ENCODE measurements at regions of chr19 and their contacts with region 1.

Region 1: GRCh38 chr19:35509861-35510625 is 3.4 kb downstream of the DMKN start:
- DNase-seq: peak; percentile 89
- ATAC-seq: peak; percentile 84
- H3K4me3 ChIP-seq: peak overlapping the region; percentile 96
- H3K27ac ChIP-seq: peak overlapping the region; percentile 77
- H3K4me1 ChIP-seq: peaks cover 13% of the 10 kb centered on the region; the same call in 1 of the 2 replicates
- H3K27me3 ChIP-seq: no peaks in the 10 kb centered on the region
- CTCF ChIP-seq: peak; percentile 88

Region 2: GRCh38 chr19:35269421-35270117 is 240.5 kb before region 1 on chr19:
- CTCF ChIA-PET with region 1: no interaction called
- POLR2A ChIA-PET with region 1: no interaction called
- intact Hi-C with region 1: loop called (anchors 5 kb)
- DNase-seq: peak; percentile 76
- ATAC-seq: peak; percentile 75
- H3K4me3 ChIP-seq: peak overlapping the region; percentile 67
- H3K27ac ChIP-seq: no peak overlapping the region
- H3K4me1 ChIP-seq: peaks cover 20% of the 10 kb centered on the region
- H3K27me3 ChIP-seq: no peaks in the 10 kb centered on the region
- CTCF ChIP-seq: peak; percentile 43

Region 3: DNA sequence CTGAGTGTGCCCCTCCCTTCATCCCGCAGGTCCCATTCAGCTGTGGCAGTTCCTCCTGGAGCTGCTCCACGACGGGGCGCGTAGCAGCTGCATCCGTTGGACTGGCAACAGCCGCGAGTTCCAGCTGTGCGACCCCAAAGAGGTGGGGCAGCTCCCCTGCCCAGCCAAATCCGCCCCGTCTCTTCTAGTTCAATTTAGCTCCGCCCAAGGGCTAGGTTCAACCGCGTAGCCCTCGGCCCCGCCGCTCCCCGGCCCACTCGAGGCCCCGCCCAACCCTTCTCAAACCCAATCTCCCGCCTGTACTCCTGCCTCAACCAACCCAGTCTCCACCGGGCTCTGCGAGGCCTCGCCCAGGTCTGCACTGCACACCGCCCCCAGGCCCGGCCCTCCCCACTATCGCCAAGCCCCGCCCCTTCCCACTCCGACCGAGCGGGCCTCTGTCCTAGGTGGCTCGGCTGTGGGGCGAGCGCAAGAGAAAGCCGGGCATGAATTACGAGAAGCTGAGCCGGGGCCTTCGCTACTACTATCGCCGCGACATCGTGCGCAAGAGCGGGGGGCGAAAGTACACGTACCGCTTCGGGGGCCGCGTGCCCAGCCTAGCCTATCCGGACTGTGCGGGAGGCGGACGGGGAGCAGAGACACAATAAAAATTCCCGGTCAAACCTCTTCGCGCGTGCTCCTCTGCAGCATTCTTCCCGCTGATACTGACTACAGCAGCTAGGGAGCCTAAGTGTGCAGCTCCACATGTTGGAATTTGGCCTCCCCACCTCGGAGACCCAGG is 134.4 kb after region 1 on chr19:
- CTCF ChIA-PET with region 1: no interaction called
- POLR2A ChIA-PET with region 1: interaction called, 3 read pairs
- intact Hi-C with region 1: loop called (anchors 5 kb)
- DNase-seq: peak; percentile 91
- ATAC-seq: peak; percentile 81
- H3K4me3 ChIP-seq: peak overlapping the region; percentile 74
- H3K27ac ChIP-seq: no peak overlapping the region; the same call in 1 of the 2 replicates
- H3K4me1 ChIP-seq: peaks cover 11% of the 10 kb centered on the region; the same call in 1 of the 2 replicates
- H3K27me3 ChIP-seq: no peaks in the 10 kb centered on the region
- CTCF ChIP-seq: no peak

Measured in PC-3 (cell line).